ENCODE measurements at regions of chr12 and their contacts with region 1.

Region 1: GRCh38 chr12:57213058-57213715 is 3.4 kb upstream of the NXPH4 start:
- DNase-seq: peak; percentile 95

Region 2: GRCh38 chr12:57238854-57239554 is 25.8 kb after region 1 on chr12:
- intact Hi-C with region 1: loop called (anchors 1 kb)
- DNase-seq: peak; percentile 95

Region 3: GRCh38 chr12:57459055-57459749 is 246.0 kb after region 1 on chr12:
- intact Hi-C with region 1: loop called (anchors 5 kb)
- DNase-seq: peak; percentile 97

Measured in cardiac septum (tissue), 1 donor.